Activated CD8-positive, alpha-beta T cell treated with anti-CD3 and anti-CD28 coated beads for 36 hours (primary cell): ENCODE measurements at regions of chr10 and their contacts with region 1.

Region 1: GRCh38 chr10:16902606-16903005 is 85.4 kb upstream of the RSU1 start:
- DNase-seq: peak; percentile 48
- ATAC-seq: peak; percentile 90
- H3K4me3 Mint-ChIP-seq: peak overlapping the region; percentile 6
- H3K27ac Mint-ChIP-seq: no peak overlapping the region
- H3K4me1 Mint-ChIP-seq: peaks cover 9% of the 10 kb centered on the region
- H3K27me3 Mint-ChIP-seq: no peaks in the 10 kb centered on the region
- CTCF ChIP-seq: no peak

Region 2: GRCh38 chr10:16891375-16892313 is 11.0 kb before region 1 on chr10:
- CTCF ChIA-PET with region 1: no interaction called
- POLR2A ChIA-PET with region 1: interaction called, 13 read pairs
- intact Hi-C with region 1: no loop called
- DNase-seq: peak; percentile 70
- ATAC-seq: peak; percentile 89
- H3K4me3 Mint-ChIP-seq: peak overlapping the region; percentile 54
- H3K27ac Mint-ChIP-seq: peak overlapping the region; percentile 48
- H3K4me1 Mint-ChIP-seq: peaks cover 10% of the 10 kb centered on the region
- H3K27me3 Mint-ChIP-seq: no peaks in the 10 kb centered on the region
- CTCF ChIP-seq: peak; percentile 36